Ovary (tissue), 10 donors: ENCODE measurements at regions of chr1 and their contacts with region 1.

Region 1: DNA sequence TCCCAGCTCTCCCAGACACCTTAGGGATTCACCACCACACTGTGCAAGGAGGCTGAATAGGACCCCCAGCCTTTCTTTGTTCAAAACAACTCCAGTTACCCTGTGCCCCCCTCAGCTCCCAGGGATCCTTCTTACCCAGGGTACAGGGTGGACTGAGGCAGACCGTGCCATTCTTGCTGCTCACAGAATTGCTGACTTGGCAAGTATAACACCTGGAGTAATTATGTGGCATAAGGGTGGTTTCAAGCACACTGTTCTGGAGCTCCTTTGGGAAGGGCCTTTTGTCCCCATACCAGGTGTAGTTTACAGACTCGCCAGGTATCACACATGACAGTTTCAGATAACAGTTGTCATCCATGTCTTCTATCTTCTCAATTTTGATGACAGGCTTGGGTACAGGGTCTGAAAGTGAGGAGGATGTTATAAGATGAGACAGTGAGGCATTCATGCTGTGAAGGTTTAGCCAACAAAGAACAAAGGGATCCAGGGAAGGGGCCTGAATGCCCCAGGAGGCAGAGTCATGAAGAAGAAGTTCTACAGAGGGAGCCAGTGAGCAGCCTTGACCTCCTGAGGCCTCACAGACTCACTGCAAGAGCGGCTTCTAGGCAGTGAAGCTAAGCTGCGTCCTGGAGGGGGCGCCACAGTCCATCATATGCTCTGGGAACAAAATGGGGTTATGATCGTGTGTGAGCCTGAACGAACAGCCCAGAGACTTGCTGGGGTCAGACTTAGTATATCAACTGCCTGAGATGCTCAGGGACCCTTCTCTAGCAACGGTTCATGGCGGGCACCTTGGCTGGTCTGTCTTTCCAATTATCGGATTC is 30.3 kb downstream of the CD48 start:
- DNase-seq: peak; percentile 60 to 86 (median 68)
- H3K4me3 ChIP-seq: no peak overlapping the region
- H3K27ac ChIP-seq: no peak overlapping the region
- H3K4me1 ChIP-seq: peaks cover 1% of the 10 kb centered on the region
- H3K27me3 ChIP-seq: no peaks in the 10 kb centered on the region
- CTCF ChIP-seq: peak in 2 of 3 donors; percentile 21 to 58
- EP300 ChIP-seq: no peak
- POLR2A ChIP-seq: no peak

Region 2: GRCh38 chr1:160987359-160988062 is 306.2 kb after region 1 on chr1:
- intact Hi-C with region 1: loop called in 1 of 4 experiments (anchors 5 kb)
- DNase-seq: no peak
- H3K4me3 ChIP-seq: no peak overlapping the region
- H3K27ac ChIP-seq: no peak overlapping the region
- H3K4me1 ChIP-seq: no peaks in the 10 kb centered on the region
- H3K27me3 ChIP-seq: no peaks in the 10 kb centered on the region
- CTCF ChIP-seq: no peak
- EP300 ChIP-seq: no peak
- POLR2A ChIP-seq: no peak